OCI-LY7 (cell line): ENCODE measurements at regions of chr12 and their contacts with region 1.

Region 1: GRCh38 chr12:84874125-84874824 is 38.3 kb downstream of the SLC6A15 start:
- DNase-seq: peak; percentile 60
- H3K4me3 ChIP-seq: no peak overlapping the region
- H3K27ac ChIP-seq: no peak overlapping the region
- H3K4me1 ChIP-seq: no peaks in the 10 kb centered on the region
- CTCF ChIP-seq: peak; percentile 91

Region 2: DNA sequence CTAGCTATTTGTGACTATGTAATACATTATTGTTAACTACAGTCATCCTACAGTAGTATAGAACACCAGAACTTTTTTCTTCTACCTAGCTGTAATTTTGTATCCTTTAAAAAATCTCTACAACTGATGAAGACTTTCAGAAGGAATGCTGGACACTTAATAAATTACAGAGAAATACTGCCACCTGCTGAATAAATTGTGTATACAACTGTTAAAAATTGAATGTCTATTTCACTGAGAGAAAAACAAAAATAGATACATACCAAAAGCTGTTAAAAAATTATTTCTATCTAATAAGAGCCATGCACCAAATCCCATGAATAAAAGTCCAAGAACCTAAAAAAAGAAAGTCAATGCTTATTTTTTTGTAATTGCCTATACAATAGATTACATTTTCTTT is 155.2 kb after region 1 on chr12:
- CTCF ChIA-PET with region 1: no interaction called
- POLR2A ChIA-PET with region 1: no interaction called
- intact Hi-C with region 1: loop called (anchors 1 kb)
- DNase-seq: peak; percentile 32
- H3K4me3 ChIP-seq: no peak overlapping the region
- H3K27ac ChIP-seq: no peak overlapping the region
- H3K4me1 ChIP-seq: no peaks in the 10 kb centered on the region
- CTCF ChIP-seq: peak; percentile 86